GM10248 (cell line): ENCODE measurements at regions of chr1 and their contacts with region 1.

Region 1: DNA sequence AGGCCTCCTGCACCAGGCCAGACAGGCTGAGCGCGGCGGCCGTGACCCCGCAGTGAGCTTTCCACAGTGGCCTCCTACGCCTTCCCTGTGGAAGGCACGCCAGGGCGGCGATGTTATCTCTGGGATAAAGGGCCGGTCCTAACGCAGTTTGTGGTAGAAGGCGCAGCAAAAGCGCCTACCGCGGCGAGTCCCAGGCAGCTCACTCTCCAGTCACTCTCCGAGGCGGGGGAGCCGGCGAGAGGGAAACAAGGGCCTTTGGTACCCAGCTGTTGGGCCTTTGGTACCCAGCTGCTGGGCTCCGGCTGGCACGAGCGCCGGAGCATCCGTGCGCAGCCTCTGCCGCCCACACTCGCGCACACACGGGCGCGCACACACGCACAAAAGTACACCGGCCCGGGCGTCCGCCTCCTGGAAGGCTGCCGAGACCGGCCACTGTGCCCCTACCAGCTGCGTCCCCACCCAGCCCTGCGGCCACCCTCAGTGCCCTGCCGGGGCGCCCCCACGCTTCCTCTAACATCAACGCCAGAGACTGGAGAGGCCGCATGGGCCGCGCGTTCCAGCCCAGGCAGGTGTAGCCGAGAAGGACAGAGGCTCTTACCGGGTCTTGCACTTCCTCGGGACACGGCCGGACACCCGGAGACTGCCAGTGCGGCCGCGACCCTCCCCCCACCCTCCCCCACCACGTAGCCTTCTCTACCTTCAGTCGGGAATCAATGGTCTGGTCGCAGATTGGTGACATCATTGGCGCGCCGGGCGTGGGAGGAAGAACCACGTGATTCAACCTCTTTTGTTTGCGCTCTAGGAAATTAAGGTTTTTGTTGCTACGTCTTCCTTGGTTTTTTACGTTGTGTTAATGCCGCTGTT is 19.5 kb upstream of the ADAR start:
- DNase-seq: peak; percentile 84
- CTCF ChIP-seq: no peak

Region 2: GRCh38 chr1:154607609-154608396 is 19.7 kb before region 1 on chr1 and contains the start of gene ADAR:
- CTCF ChIA-PET with region 1: interaction called, 13 read pairs
- POLR2A ChIA-PET with region 1: no interaction called
- DNase-seq: peak; percentile 90
- CTCF ChIP-seq: peak; percentile 9

Region 3: GRCh38 chr1:154703170-154703569 is 75.7 kb after region 1 on chr1:
- CTCF ChIA-PET with region 1: no interaction called
- POLR2A ChIA-PET with region 1: no interaction called
- DNase-seq: no peak
- CTCF ChIP-seq: no peak